Activated B cell treated with CpG ODN at 0.5 μM for 24 hours (primary cell): ENCODE measurements at regions of chr1 and their contacts with region 1.

Region 1: DNA sequence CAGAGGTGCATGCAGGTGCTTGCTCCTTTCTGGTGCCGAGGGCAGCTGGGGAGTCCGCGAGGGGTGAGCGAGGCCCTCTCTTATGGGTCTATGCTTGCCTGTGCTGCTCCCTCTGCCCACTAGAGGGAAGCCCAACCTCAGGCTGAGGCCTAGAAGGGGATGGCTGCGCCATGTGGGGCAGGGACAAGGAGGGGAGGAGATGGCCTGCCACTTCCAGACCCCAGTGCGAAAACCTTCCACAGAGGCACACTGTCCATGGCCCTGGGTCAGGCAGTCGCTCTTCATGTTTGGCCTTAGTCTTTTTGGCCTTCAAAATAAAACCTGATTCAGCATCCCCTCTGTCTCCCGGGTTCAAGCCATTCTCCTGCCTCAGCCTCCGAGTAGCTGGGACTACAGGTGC is 14.0 kb downstream of the RHBG start:
- DNase-seq: peak; percentile 46
- ATAC-seq: peak; percentile 97
- H3K4me3 Mint-ChIP-seq: no peak overlapping the region
- H3K27ac Mint-ChIP-seq: no peak overlapping the region
- H3K4me1 Mint-ChIP-seq: peaks cover 6% of the 10 kb centered on the region
- H3K27me3 Mint-ChIP-seq: peaks cover 17% of the 10 kb centered on the region
- CTCF ChIP-seq: no peak

Region 2: DNA sequence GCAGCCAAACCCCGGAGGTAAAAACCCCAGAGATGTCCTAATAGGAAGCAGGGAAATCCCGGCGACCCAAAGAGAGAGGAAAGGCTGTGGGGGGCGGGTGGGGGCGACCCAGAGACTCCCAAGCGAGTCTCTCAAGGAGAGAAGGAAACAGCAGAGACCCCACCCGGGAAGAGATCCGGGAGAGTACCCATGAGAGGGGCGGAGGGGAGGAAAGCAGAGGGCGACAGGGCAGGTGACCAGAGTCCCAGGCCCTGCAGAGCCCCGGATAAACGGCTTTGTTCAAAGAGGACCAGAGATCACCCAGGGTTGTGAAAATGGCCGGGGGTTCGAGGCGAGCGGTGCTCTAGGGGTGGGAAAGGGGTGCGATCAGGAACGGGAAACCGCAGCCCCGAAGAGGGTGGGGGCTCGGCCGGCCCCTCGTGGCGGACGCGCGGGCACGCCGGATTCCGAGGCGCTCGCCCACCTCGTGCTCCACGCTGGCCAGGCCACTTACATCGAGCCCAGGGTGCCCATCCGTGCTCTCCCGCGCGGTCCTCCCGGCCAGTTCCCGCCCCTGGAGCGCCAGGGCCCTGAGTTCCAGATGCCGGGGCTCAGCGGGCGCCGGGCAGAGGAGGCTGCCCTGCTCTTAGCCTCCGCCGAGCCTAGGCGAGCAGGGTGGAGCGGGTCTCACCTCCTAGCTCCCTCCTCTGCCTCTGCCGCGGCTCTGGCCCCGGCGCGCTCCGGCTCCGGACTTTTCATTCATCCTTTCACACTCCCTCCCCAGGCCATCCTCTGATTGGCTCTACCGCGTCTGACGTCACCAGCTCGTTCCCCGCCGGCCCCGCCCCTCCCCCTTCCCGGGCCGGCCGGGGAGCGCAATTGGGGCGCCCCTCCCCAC is 38.3 kb after region 1 on chr1:
- CTCF ChIA-PET with region 1: interaction called, 13 read pairs
- POLR2A ChIA-PET with region 1: interaction called, 3 read pairs
- intact Hi-C with region 1: no loop called
- DNase-seq: peak; percentile 50
- ATAC-seq: peak; percentile 73
- H3K4me3 Mint-ChIP-seq: peak overlapping the region; percentile 89
- H3K27ac Mint-ChIP-seq: no peak overlapping the region
- H3K4me1 Mint-ChIP-seq: peaks cover 23% of the 10 kb centered on the region
- H3K27me3 Mint-ChIP-seq: peaks cover 74% of the 10 kb centered on the region
- CTCF ChIP-seq: no peak

Region 3: GRCh38 chr1:156451505-156452160 is 68.6 kb after region 1 on chr1:
- CTCF ChIA-PET with region 1: interaction called, 223 read pairs
- POLR2A ChIA-PET with region 1: interaction called, 10 read pairs
- intact Hi-C with region 1: loop called (anchors 1 kb)
- DNase-seq: no peak
- ATAC-seq: no peak
- H3K4me3 Mint-ChIP-seq: no peak overlapping the region
- H3K27ac Mint-ChIP-seq: no peak overlapping the region
- H3K4me1 Mint-ChIP-seq: peaks cover 6% of the 10 kb centered on the region
- H3K27me3 Mint-ChIP-seq: peaks cover 16% of the 10 kb centered on the region
- CTCF ChIP-seq: no peak

Region 4: GRCh38 chr1:156608036-156608674 is 225.1 kb after region 1 on chr1:
- CTCF ChIA-PET with region 1: interaction called, 47 read pairs
- POLR2A ChIA-PET with region 1: interaction called, 3 read pairs
- intact Hi-C with region 1: loop called (anchors 1 kb)
- DNase-seq: no peak
- ATAC-seq: peak; percentile 78
- H3K4me3 Mint-ChIP-seq: peak overlapping the region; percentile 55
- H3K27ac Mint-ChIP-seq: peak overlapping the region; percentile 73
- H3K4me1 Mint-ChIP-seq: peaks cover 27% of the 10 kb centered on the region
- H3K27me3 Mint-ChIP-seq: peaks cover 5% of the 10 kb centered on the region
- CTCF ChIP-seq: peak; percentile 45

Region 5: GRCh38 chr1:156677616-156678596 is 294.9 kb after region 1 on chr1:
- CTCF ChIA-PET with region 1: no interaction called
- POLR2A ChIA-PET with region 1: no interaction called
- intact Hi-C with region 1: loop called (anchors 1 kb)
- DNase-seq: no peak
- ATAC-seq: peak; percentile 49
- H3K4me3 Mint-ChIP-seq: peak overlapping the region; percentile 32
- H3K27ac Mint-ChIP-seq: no peak overlapping the region
- H3K4me1 Mint-ChIP-seq: peaks cover 27% of the 10 kb centered on the region
- H3K27me3 Mint-ChIP-seq: peaks cover 69% of the 10 kb centered on the region
- CTCF ChIP-seq: no peak